ENCODE measurements at regions of chr1 and their contacts with region 1.

Region 1: DNA sequence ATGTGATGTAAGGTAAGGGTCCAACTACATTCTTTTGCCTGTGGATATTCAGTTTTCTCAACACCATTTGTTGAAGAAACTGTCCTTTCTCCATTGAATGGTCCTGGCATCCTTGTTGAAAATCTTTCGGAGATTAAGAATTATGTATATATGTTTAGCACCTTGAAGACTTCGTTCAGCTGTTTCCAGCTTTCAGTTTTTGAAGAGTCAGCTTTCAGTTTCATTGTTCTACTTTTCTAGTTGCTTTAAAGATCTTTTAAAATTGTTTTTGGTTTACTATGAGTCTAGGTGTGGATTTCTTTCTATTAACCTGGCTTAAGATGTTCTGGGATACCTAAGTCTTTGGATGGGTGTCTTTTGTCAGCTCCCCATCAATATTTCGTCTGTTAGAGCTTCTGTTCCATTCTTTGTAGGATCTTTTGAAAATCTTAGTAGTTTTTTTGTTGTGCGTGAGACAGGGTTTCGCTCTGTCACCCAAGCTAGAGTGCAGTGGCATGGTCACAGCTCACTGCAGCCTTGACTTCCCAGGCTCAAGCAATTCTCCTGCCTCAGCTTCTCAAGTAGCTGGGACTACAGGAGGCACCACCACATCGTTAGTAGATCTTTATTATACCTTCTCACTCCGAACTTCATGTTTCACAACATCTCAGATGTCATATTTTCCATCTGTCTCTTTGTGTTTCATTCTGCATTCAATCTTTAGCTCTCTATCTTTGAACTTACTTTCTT is 353.5 kb upstream of the B3GALT2 start:
- DNase-seq: no peak
- H3K4me3 ChIP-seq: no peak overlapping the region
- H3K4me3 Mint-ChIP-seq: no peak overlapping the region
- H3K27ac Mint-ChIP-seq: no peak overlapping the region
- H3K4me1 ChIP-seq: peaks cover 3% of the 10 kb centered on the region; the same call in 1 of the 2 replicates
- H3K4me1 Mint-ChIP-seq: peaks cover 14% of the 10 kb centered on the region
- H3K27me3 ChIP-seq: no peaks in the 10 kb centered on the region
- H3K27me3 Mint-ChIP-seq: no peaks in the 10 kb centered on the region
- CTCF ChIP-seq: no peak

Region 2: GRCh38 chr1:193462629-193463320 is 77.1 kb before region 1 on chr1:
- CTCF ChIA-PET with region 1: no interaction called
- POLR2A ChIA-PET with region 1: no interaction called
- intact Hi-C with region 1: loop called (anchors 5 kb)
- DNase-seq: peak in 1 of 2 experiments; percentile 3
- H3K4me3 ChIP-seq: no peak overlapping the region
- H3K4me3 Mint-ChIP-seq: no peak overlapping the region
- H3K27ac Mint-ChIP-seq: no peak overlapping the region
- H3K4me1 ChIP-seq: peaks cover 14% of the 10 kb centered on the region
- H3K4me1 Mint-ChIP-seq: peaks cover 4% of the 10 kb centered on the region
- H3K27me3 ChIP-seq: no peaks in the 10 kb centered on the region; the same call in 1 of the 2 replicates
- H3K27me3 Mint-ChIP-seq: no peaks in the 10 kb centered on the region
- CTCF ChIP-seq: no peak

Region 3: GRCh38 chr1:193729429-193729828 is 189.5 kb after region 1 on chr1:
- CTCF ChIA-PET with region 1: no interaction called
- POLR2A ChIA-PET with region 1: no interaction called
- intact Hi-C with region 1: no loop called
- DNase-seq: no peak
- H3K4me3 ChIP-seq: no peak overlapping the region
- H3K4me3 Mint-ChIP-seq: no peak overlapping the region
- H3K27ac Mint-ChIP-seq: no peak overlapping the region
- H3K4me1 ChIP-seq: no peaks in the 10 kb centered on the region
- H3K4me1 Mint-ChIP-seq: no peaks in the 10 kb centered on the region
- H3K27me3 ChIP-seq: no peaks in the 10 kb centered on the region
- H3K27me3 Mint-ChIP-seq: peaks cover 5% of the 10 kb centered on the region
- CTCF ChIP-seq: no peak

Region 4: DNA sequence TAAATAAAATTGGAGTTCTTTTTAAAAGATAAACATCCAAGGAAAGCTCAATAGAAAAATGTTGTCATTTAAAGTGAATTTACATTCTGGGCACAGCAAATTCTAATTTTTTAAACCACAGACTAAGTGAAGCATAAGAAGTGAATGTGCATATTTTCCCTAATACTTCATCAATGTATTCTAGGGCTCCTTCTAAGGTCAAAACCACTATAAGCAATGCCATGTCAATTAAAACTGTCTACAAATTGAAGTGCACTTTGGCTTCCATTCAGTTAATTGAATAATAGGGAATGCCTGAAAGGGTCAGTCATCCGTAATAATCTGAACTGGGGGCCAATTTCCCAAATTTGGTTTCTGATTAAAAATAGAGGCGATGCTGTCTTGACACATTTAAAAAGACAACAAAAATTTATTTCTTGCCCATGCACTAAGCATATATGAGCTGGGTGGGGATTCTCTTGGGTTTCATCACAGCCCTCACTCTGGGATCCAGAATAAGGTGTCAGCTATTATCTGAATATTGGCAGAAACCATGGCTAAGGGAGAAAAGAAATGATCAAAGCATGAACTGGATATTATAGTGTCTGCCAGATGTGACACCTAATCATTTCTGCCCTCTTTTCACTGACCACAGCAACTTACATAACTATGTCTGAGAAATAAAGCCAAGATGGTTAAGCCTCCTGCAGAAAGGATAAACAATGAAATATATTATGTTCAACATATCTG is 307.1 kb after region 1 on chr1:
- CTCF ChIA-PET with region 1: no interaction called
- POLR2A ChIA-PET with region 1: no interaction called
- intact Hi-C with region 1: no loop called
- DNase-seq: no peak
- H3K4me3 ChIP-seq: no peak overlapping the region
- H3K4me3 Mint-ChIP-seq: no peak overlapping the region
- H3K27ac Mint-ChIP-seq: no peak overlapping the region
- H3K4me1 ChIP-seq: no peaks in the 10 kb centered on the region
- H3K4me1 Mint-ChIP-seq: no peaks in the 10 kb centered on the region
- H3K27me3 ChIP-seq: no peaks in the 10 kb centered on the region
- H3K27me3 Mint-ChIP-seq: no peaks in the 10 kb centered on the region
- CTCF ChIP-seq: no peak